ENCODE measurements at regions of chr5 and their contacts with region 1.

Region 1: GRCh38 chr5:143063175-143063970 is 293.2 kb downstream of the ARHGAP26 start:
- DNase-seq: no peak
- H3K4me3 ChIP-seq: no peak overlapping the region
- H3K27ac ChIP-seq: peak overlapping the region; percentile 12
- H3K4me1 ChIP-seq: peaks cover 59% of the 10 kb centered on the region
- H3K27me3 ChIP-seq: no peaks in the 10 kb centered on the region
- CTCF ChIP-seq: no peak
- POLR2A ChIP-seq: no peak

Region 2: DNA sequence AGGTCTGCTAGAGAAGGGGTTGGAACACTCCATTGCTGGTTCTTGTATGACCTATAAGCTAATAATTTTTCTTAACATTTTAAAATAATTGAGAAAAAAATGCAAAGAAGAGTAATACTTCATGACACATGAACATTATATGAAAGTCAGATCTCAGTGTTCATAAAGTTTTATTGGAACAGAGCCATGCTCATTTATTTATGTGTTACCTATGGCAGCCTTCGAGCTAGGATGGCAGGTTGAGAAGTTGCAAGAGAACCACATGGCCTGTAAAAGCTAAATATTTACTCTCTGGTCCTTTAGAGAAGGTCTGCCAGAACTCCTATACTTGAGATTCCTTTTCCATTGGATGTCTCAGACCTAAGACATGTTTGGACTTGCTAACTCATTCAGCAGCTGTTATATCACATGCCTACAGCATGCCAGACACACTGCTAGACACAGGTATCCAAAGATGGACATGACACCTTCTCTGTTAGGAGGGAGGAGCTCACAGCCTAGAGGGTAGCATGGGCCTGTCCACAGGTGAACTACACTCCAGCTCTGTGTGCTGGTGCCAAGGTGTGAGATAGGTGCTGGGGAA is 11.1 kb after region 1 on chr5:
- CTCF ChIA-PET with region 1: interaction called, 10 read pairs
- POLR2A ChIA-PET with region 1: no interaction called
- dilution Hi-C with region 1: no loop called
- intact Hi-C with region 1: no loop called
- DNase-seq: no peak
- H3K4me3 ChIP-seq: no peak overlapping the region
- H3K27ac ChIP-seq: no peak overlapping the region
- H3K4me1 ChIP-seq: no peaks in the 10 kb centered on the region
- H3K27me3 ChIP-seq: no peaks in the 10 kb centered on the region
- CTCF ChIP-seq: no peak
- POLR2A ChIP-seq: no peak

Region 3: GRCh38 chr5:143083006-143083405 is 19.6 kb after region 1 on chr5:
- CTCF ChIA-PET with region 1: interaction called, 7 read pairs
- POLR2A ChIA-PET with region 1: no interaction called
- dilution Hi-C with region 1: no loop called
- intact Hi-C with region 1: loop called (anchors 1 kb)
- DNase-seq: peak; percentile 69
- H3K4me3 ChIP-seq: no peak overlapping the region
- H3K27ac ChIP-seq: no peak overlapping the region
- H3K4me1 ChIP-seq: peaks cover 7% of the 10 kb centered on the region
- H3K27me3 ChIP-seq: no peaks in the 10 kb centered on the region
- CTCF ChIP-seq: no peak
- POLR2A ChIP-seq: no peak

Region 4: DNA sequence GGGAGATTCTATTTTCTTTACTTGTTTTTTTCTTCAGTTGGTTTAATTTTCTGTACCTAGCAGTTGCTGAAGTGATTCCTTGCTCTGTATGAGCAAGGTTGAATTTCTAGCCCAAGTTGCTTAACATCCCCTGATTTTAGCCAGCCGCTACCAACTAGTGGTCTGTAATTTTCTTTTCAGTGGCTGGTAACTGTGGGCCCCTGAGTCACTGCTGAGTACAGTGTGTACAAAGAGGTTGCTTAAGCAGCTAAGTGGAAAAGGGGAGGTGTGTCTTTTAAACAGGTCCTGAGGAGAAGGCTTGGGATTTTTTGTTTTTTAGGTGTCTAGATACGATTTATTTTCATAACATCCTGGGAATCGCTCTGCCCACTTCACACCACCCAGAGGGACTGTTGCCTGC is 85.4 kb after region 1 on chr5:
- CTCF ChIA-PET with region 1: no interaction called
- POLR2A ChIA-PET with region 1: no interaction called
- dilution Hi-C with region 1: no loop called
- intact Hi-C with region 1: no loop called
- DNase-seq: no peak
- H3K4me3 ChIP-seq: no peak overlapping the region
- H3K27ac ChIP-seq: no peak overlapping the region
- H3K4me1 ChIP-seq: no peaks in the 10 kb centered on the region
- H3K27me3 ChIP-seq: no peaks in the 10 kb centered on the region
- CTCF ChIP-seq: no peak
- POLR2A ChIP-seq: no peak

Measured in endothelial cell of umbilical vein (primary cell).